ENCODE measurements at regions of chr1 and their contacts with region 1.

Region 1: GRCh38 chr1:172002725-172003345 is 161.5 kb downstream of the DNM3 start:
- DNase-seq: no peak
- ATAC-seq: no peak
- H3K4me3 Mint-ChIP-seq: no peak overlapping the region
- H3K27ac Mint-ChIP-seq: no peak overlapping the region
- H3K4me1 Mint-ChIP-seq: no peaks in the 10 kb centered on the region
- H3K27me3 Mint-ChIP-seq: no peaks in the 10 kb centered on the region
- CTCF ChIP-seq: peak; percentile 32

Region 2: GRCh38 chr1:172089768-172090510 is 87.1 kb after region 1 on chr1:
- CTCF ChIA-PET with region 1: interaction called, 10 read pairs
- POLR2A ChIA-PET with region 1: interaction called, 3 read pairs
- intact Hi-C with region 1: loop called (anchors 1 kb)
- DNase-seq: peak; percentile 41
- ATAC-seq: peak; percentile 90
- H3K4me3 Mint-ChIP-seq: peak overlapping the region; percentile 36
- H3K27ac Mint-ChIP-seq: peak overlapping the region; percentile 8
- H3K4me1 Mint-ChIP-seq: peaks cover 8% of the 10 kb centered on the region
- H3K27me3 Mint-ChIP-seq: no peaks in the 10 kb centered on the region
- CTCF ChIP-seq: no peak

Region 3: DNA sequence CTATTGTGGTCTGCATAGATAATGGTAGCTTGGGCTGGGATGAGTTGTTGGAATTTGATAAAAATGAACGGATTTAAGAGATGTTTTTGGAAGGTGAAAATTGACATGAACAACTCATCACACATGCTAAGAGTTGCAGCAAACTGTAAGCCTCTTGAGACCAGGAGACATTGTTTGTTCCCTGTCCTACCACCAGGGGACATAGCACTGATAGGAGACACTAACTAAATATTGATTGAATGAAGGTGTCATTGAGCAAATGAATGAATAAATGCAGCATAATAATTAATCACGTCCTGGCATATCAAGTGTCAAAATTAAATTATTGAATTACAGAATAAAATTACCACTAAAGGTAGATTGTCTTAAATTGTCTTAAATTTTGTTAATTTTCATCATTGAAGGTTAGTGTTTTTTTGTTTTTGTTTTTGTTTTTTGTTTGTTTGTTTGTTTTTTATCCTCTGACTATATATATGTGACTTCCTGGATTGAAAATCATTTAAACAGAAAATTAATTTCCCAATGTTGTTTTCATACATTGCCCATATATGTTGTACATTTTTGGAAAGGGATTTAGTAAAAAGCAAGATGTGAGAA is 132.3 kb after region 1 on chr1:
- CTCF ChIA-PET with region 1: interaction called, 3 read pairs
- POLR2A ChIA-PET with region 1: no interaction called
- intact Hi-C with region 1: loop called (anchors 5 kb)
- DNase-seq: no peak
- ATAC-seq: peak; percentile 49
- H3K4me3 Mint-ChIP-seq: no peak overlapping the region
- H3K27ac Mint-ChIP-seq: no peak overlapping the region
- H3K4me1 Mint-ChIP-seq: peaks cover 5% of the 10 kb centered on the region
- H3K27me3 Mint-ChIP-seq: no peaks in the 10 kb centered on the region
- CTCF ChIP-seq: no peak

Region 4: DNA sequence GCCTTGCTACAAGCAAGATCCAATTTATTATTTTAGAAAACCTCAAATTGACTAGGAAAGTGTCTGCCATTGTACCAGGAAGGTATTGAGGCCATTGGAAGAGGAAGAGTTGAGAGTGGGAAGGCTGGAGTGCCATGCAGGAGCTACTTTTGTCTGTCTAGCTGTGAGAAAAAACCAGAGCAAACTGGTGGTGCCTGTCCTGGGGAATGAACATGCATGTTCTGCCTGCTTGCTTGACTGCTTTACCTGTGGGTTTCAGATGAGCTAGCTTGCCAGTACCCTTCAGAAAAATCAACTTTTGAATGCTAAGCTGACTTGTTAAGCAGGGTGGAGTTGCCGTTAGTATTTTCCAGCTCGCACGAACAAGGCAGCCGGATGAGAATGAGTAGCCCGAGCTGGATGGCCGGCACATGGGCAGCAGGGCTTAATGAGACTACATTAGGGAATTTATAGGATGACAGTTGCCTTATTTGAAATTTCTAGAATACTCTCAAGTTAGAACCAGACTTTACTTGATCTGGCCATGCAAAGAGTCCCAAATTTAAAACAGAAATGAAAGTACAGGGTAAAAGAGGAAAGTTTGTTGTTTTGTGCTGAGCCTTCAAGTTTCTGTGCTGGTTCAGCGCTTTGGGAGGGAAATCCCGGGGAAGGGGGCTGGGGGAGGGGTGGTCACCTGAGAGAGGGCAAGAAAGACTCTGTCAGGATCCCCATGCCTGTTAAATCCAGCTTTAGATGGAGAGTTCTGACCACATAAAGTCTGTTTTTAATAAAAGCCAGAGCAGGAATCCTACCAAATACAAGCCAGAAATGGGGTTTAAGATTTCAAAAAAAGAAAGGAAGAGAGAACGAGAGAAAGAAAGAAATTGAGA is 388.1 kb after region 1 on chr1:
- CTCF ChIA-PET with region 1: interaction called, 13 read pairs
- POLR2A ChIA-PET with region 1: interaction called, 3 read pairs
- intact Hi-C with region 1: no loop called
- DNase-seq: peak; percentile 36
- ATAC-seq: peak; percentile 76
- H3K4me3 Mint-ChIP-seq: peak overlapping the region; percentile 88
- H3K27ac Mint-ChIP-seq: peak overlapping the region; percentile 99
- H3K4me1 Mint-ChIP-seq: peaks cover 64% of the 10 kb centered on the region
- H3K27me3 Mint-ChIP-seq: no peaks in the 10 kb centered on the region
- CTCF ChIP-seq: no peak

Region 5: DNA sequence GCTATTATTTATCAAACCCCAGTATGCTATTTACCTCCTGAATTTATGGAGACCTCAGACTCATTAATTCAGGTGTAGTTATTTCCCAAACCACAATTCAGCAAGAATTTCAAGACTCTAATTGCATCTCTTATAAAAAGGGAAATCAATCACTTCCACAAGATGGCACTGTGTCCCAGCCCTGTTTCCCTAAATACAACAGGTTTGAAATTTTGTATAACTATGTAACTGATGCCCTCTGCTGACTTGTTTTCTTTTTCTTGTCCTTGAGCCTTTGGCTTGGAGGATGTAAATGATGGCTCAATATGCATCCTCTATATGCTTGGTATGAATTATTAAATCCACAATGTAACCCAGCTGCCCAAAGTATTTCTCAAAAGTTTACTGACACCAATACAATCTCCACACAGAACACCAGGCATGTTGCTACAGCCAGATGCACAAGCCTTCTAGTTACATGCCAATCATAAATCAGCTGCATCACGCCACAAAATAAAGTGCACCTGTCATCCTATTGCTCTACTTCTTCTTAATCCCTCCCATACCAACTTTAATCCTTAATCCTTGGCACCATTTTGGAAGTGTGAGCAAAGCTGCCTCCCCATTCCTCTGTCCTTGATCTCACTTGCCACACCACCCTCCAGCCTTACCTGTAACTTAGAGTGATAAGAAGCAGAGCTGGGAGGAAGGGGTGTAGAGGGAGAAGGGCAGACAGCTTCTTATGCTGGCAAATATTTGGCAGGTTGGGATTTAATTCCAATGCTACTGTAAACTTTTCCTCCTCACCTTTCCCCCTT is 426.7 kb after region 1 on chr1:
- CTCF ChIA-PET with region 1: interaction called, 50 read pairs
- POLR2A ChIA-PET with region 1: no interaction called
- intact Hi-C with region 1: loop called (anchors 1 kb)
- DNase-seq: no peak
- ATAC-seq: peak; percentile 67
- H3K4me3 Mint-ChIP-seq: no peak overlapping the region
- H3K27ac Mint-ChIP-seq: no peak overlapping the region
- H3K4me1 Mint-ChIP-seq: peaks cover 13% of the 10 kb centered on the region
- H3K27me3 Mint-ChIP-seq: no peaks in the 10 kb centered on the region
- CTCF ChIP-seq: no peak

Region 6: DNA sequence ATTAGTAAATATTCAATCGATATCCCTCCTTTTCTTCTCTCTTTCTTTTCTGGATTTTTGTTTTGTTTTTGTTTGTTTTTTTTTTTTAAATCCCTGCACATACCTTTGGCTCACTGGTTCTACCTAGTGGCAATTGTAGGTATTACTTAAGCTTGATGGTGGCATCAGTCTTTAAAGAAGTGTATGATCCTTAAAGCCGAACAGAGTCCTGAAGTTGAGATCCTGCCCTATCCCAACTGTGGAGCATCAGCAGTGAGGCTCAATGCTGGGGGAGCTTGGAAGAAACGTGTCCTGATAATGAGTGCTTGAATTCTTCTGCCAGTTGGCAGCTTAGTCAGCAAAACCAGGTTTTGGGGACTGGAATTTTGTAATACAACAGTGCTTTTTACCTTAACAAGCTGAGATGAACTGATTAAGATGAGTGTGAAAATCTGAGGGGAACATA is 716.9 kb after region 1 on chr1:
- CTCF ChIA-PET with region 1: interaction called, 15 read pairs
- POLR2A ChIA-PET with region 1: no interaction called
- intact Hi-C with region 1: loop called (anchors 1 kb)
- DNase-seq: no peak
- ATAC-seq: peak; percentile 77
- H3K4me3 Mint-ChIP-seq: no peak overlapping the region
- H3K27ac Mint-ChIP-seq: peak overlapping the region; percentile 25
- H3K4me1 Mint-ChIP-seq: peaks cover 10% of the 10 kb centered on the region
- H3K27me3 Mint-ChIP-seq: no peaks in the 10 kb centered on the region
- CTCF ChIP-seq: peak; percentile 64